Activated B cell treated with CpG ODN at 0.5 μM for 24 hours (primary cell): ENCODE measurements at regions of chr7 and their contacts with region 1.

Region 1: GRCh38 chr7:104943502-104944343 is 70.3 kb upstream of the KMT2E start:
- DNase-seq: peak; percentile 53
- ATAC-seq: peak; percentile 9
- H3K4me3 Mint-ChIP-seq: peak overlapping the region; percentile 98
- H3K27ac Mint-ChIP-seq: peak overlapping the region; percentile 100
- H3K4me1 Mint-ChIP-seq: peaks cover 83% of the 10 kb centered on the region
- H3K27me3 Mint-ChIP-seq: no peaks in the 10 kb centered on the region
- CTCF ChIP-seq: no peak

Region 2: GRCh38 chr7:103074519-103075336 is 1869.0 kb before region 1 on chr7 and contains the starts of genes ARMC10 and FBXL13:
- CTCF ChIA-PET with region 1: no interaction called
- POLR2A ChIA-PET with region 1: no interaction called
- intact Hi-C with region 1: loop called (anchors 10 kb)
- DNase-seq: peak; percentile 95
- ATAC-seq: peak; percentile 85
- H3K4me3 Mint-ChIP-seq: peak within 1 kb of the TSS; percentile 94
- H3K27ac Mint-ChIP-seq: peak within 1 kb of the TSS; percentile 95
- H3K4me1 Mint-ChIP-seq: peaks cover 41% of the 10 kb centered on the region
- H3K27me3 Mint-ChIP-seq: no peaks in the 10 kb centered on the region
- CTCF ChIP-seq: no peak
- total RNA-seq, gene ARMC10: 24.9 and 26.7 TPM in 2 replicates
- total RNA-seq, gene FBXL13: 2.9 and 3.4 TPM in 2 replicates

Region 3: GRCh38 chr7:104956753-104957450 is 13.2 kb after region 1 on chr7:
- CTCF ChIA-PET with region 1: no interaction called
- POLR2A ChIA-PET with region 1: interaction called, 10 read pairs
- intact Hi-C with region 1: loop called (anchors 1 kb)
- DNase-seq: no peak
- ATAC-seq: peak; percentile 47
- H3K4me3 Mint-ChIP-seq: no peak overlapping the region
- H3K27ac Mint-ChIP-seq: peak overlapping the region; percentile 77
- H3K4me1 Mint-ChIP-seq: peaks cover 48% of the 10 kb centered on the region
- H3K27me3 Mint-ChIP-seq: no peaks in the 10 kb centered on the region
- CTCF ChIP-seq: no peak

Region 4: GRCh38 chr7:105531792-105532671 is 588.3 kb after region 1 on chr7 and contains the start of gene RINT1:
- CTCF ChIA-PET with region 1: no interaction called
- POLR2A ChIA-PET with region 1: interaction called, 5 read pairs
- intact Hi-C with region 1: loop called (anchors 2 kb)
- DNase-seq: peak; percentile 90
- ATAC-seq: peak; percentile 92
- H3K4me3 Mint-ChIP-seq: peak within 1 kb of the TSS; percentile 91
- H3K27ac Mint-ChIP-seq: peak within 1 kb of the TSS; percentile 96
- H3K4me1 Mint-ChIP-seq: peaks cover 33% of the 10 kb centered on the region
- H3K27me3 Mint-ChIP-seq: no peaks in the 10 kb centered on the region
- CTCF ChIP-seq: no peak
- total RNA-seq, gene RINT1: 31.1 and 35.5 TPM in 2 replicates

Region 5: DNA sequence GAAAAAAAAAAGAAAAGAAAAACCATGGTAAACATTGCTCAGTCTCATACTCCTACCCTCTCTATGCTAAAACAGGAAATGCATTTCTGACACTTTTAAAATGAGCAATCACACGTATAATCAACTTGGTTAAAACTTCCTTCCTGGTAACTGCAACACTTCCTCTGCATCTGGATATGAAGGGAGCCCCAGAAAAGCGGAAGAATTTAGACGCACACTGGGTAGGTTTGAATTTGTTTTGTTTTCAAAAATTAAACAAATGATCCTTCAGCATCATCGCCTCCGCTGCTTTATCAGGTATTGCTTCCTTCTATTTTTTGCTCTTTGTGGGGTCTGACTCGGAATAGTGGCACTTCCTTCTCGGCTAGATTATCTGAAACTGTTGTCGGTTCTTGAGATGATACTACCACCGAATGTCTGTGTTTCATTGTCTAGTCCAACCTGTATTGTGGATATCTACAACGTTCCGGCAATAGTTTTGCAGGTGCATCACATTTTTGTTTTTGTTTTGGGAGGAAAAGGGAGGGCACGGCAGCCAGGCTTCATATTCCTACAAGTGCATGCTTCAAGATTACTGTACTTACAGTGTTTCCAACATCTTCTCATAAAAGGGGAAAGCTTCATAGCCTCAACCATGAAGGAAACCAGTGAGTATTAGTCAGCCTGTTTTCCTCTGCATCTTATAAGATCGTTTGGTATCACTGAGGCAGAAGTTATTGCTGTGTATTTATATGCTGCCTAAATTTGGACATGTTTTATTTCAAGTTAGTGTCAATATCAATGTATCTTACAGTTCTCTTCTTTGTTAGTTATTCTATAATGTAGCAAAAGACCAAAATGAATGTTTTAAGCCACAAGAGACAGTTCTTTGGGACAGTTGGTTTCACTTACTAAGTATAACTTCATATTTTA is 1921.7 kb after region 1 on chr7 and contains the start of gene PIK3CG:
- CTCF ChIA-PET with region 1: no interaction called
- POLR2A ChIA-PET with region 1: no interaction called
- intact Hi-C with region 1: loop called (anchors 10 kb)
- DNase-seq: no peak
- ATAC-seq: peak; percentile 83
- H3K4me3 Mint-ChIP-seq: peak within 1 kb of the TSS; percentile 91
- H3K27ac Mint-ChIP-seq: peak within 1 kb of the TSS; percentile 90
- H3K4me1 Mint-ChIP-seq: peaks cover 71% of the 10 kb centered on the region
- H3K27me3 Mint-ChIP-seq: no peaks in the 10 kb centered on the region
- CTCF ChIP-seq: no peak
- total RNA-seq, gene PIK3CG: 62.0 and 63.6 TPM in 2 replicates